Caco-2 (cell line): ENCODE measurements at regions of chr10 and their contacts with region 1.

Region 1: DNA sequence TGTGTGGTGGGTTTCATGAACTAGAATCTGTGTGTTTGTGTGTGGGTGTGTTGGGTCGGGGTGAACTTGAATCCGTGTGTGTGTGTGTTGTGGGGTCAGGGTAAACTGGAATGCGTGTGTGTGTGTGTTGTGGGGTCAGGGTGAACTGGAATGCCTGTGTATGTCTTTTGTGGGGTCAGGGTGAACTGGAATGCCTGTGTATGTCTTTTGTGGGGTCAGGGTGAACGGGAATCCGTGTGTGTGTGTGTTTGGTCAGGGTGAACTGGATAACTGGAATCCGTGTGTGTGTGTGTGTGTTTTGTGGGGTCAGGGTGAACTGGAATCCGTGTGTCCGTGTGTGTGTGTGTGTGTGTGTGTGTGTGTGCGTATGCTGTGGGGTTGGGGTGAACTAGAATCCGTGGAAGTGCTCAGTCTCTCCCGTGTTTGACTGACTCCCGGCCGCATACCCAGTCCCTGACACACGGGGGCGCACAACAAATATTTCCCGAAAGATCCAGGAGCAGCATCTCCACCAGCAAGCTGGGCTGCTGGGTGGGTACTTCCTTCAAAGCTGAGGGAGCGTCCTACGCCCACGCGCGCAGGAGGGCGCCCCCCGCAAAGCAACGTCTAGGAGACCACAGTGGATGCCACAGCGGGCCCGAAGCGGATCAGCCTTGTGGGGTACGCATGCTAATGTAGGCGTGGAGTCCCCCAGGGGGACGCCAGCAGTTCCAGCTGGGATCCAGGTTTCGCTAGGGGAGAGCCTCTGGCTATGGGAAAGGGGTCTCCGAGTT is 836 bp upstream of the CASP7 start:
- DNase-seq: peak; percentile 88 to 90
- H3K4me3 ChIP-seq: peak overlapping the region; percentile 59
- H3K4me3 Mint-ChIP-seq: peak overlapping the region; percentile 98
- H3K27ac Mint-ChIP-seq: peak overlapping the region; percentile 25
- H3K4me1 ChIP-seq: no peaks in the 10 kb centered on the region
- H3K4me1 Mint-ChIP-seq: peaks cover 7% of the 10 kb centered on the region
- H3K27me3 ChIP-seq: no peaks in the 10 kb centered on the region
- H3K27me3 Mint-ChIP-seq: peaks cover 7% of the 10 kb centered on the region
- CTCF ChIP-seq: peak; percentile 58 to 88

Region 2: DNA sequence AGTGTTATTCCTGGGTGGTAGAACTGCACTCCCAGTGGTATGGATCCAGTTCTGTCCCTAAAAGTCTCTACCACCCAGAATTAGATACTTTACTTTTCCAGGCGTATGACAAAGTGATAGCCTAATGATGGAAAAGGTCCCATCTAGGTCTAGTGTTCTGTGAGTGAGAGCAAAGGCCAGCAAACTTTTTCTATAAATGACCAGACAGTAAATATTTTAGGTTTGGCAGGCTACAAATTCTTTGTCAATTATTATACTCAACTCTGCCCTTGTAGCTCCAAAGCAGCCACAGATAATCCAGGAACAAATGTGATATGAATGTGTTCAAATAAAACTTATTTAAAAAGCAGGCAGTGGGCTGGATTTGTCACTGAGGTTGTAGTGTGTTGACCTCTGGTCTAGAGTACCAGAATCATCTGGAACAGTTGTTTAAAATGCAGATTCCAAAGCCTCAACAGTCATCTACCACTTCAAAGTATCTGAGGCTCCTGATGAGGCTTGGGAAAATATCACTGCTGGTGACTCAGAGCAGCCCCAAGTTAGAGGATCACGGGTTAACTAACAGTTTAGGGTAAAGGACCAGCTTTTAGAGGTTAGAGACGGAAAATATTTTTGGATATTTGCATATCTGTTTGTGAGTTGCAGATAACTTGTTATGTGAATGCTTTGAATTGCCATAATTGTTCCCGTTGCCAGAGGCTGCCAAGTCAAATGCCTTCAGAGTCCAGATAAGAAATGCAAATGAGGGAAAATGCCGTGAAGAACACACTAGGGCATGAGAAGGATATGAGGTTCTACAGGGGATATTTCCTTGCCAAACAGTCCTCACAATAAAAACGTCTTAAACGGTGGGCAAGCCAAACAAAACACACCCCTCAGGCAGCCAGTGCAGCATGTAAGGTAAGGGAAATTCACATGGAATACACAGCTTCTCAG is 34.4 kb before region 1 on chr10:
- CTCF ChIA-PET with region 1: interaction called, 3 read pairs
- POLR2A ChIA-PET with region 1: no interaction called
- intact Hi-C with region 1: loop called (anchors 2 kb)
- DNase-seq: no peak
- H3K4me3 ChIP-seq: no peak overlapping the region
- H3K4me3 Mint-ChIP-seq: peak overlapping the region; percentile 40
- H3K27ac Mint-ChIP-seq: no peak overlapping the region
- H3K4me1 ChIP-seq: peaks cover 13% of the 10 kb centered on the region; the same call in 1 of the 2 replicates
- H3K4me1 Mint-ChIP-seq: peaks cover 6% of the 10 kb centered on the region
- H3K27me3 ChIP-seq: no peaks in the 10 kb centered on the region
- H3K27me3 Mint-ChIP-seq: peaks cover 13% of the 10 kb centered on the region
- CTCF ChIP-seq: no peak

Region 3: GRCh38 chr10:113666682-113667252 is 12.1 kb before region 1 on chr10:
- CTCF ChIA-PET with region 1: interaction called, 3 read pairs
- POLR2A ChIA-PET with region 1: no interaction called
- intact Hi-C with region 1: loop called (anchors 1 kb)
- DNase-seq: no peak
- H3K4me3 ChIP-seq: no peak overlapping the region
- H3K4me3 Mint-ChIP-seq: no peak overlapping the region
- H3K27ac Mint-ChIP-seq: no peak overlapping the region
- H3K4me1 ChIP-seq: peaks cover 3% of the 10 kb centered on the region; the same call in 1 of the 2 replicates
- H3K4me1 Mint-ChIP-seq: peaks cover 6% of the 10 kb centered on the region
- H3K27me3 ChIP-seq: no peaks in the 10 kb centered on the region
- H3K27me3 Mint-ChIP-seq: no peaks in the 10 kb centered on the region
- CTCF ChIP-seq: no peak